Activated T-helper 1 cell treated with anti-CD3 and anti-CD28 coated beads, Interleukin-12 subunit alpha, Interleukin-12 subunit beta, Interleukin-2, Interleukin-4 antibody, amounts not matched to agents 30 ng/mL and 10 ng/mL and 1 ng/mL, durations not matched to agents 14 hours and 24 hours and 36 hours (primary cell): ENCODE measurements at regions of chr3 and their contacts with region 1.

Region 1: GRCh38 chr3:172666873-172667694 is 43.8 kb downstream of the NCEH1 start:
- DNase-seq: peak; percentile 70
- H3K4me3 Mint-ChIP-seq: peak overlapping the region; percentile 43
- H3K27ac Mint-ChIP-seq: no peak overlapping the region
- H3K4me1 Mint-ChIP-seq: peaks cover 20% of the 10 kb centered on the region
- H3K27me3 Mint-ChIP-seq: no peaks in the 10 kb centered on the region

Region 2: DNA sequence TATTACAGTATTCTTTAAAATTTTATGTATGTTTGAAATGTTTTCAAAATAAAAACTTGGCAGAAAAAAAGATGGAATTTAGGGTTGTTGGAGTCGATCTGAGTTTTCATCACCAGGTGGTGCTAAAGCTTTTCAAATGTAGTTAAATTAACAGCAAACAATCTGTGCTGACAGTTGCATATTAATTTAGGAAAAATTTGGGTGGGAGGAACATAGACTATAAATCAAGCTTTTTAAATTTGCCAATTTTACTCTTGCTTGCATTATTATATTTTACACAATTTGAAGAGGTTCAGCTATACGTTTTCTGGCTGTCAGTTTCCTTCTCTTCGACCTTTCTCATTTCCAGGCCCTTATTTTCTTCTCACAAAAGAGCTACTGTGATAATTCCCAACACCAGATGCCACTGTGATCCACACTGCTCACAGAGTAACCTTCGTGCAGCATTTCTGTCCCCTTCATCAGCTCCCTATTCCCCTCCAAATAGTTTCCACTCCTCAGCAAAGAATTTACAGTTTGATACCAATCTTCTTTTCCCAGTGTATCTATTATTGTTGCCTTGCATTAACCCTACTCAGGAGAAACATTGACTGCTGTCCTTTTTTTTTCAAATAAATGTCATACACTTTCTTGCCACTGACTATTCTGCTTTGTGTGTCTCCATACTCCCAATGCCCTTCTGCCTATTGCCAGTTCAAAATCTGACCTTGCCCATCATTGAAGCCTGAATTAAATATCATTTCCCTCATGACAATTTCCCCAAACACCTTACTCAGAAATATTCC is 1705.3 kb before region 1 on chr3:
- intact Hi-C with region 1: loop called (anchors 2 kb)
- DNase-seq: no peak
- H3K4me3 Mint-ChIP-seq: no peak overlapping the region
- H3K27ac Mint-ChIP-seq: no peak overlapping the region
- H3K4me1 Mint-ChIP-seq: no peaks in the 10 kb centered on the region
- H3K27me3 Mint-ChIP-seq: peaks cover 13% of the 10 kb centered on the region

Region 3: GRCh38 chr3:171646357-171647133 is 1020.5 kb before region 1 on chr3:
- intact Hi-C with region 1: loop called (anchors 2 kb)
- DNase-seq: no peak
- H3K4me3 Mint-ChIP-seq: no peak overlapping the region
- H3K27ac Mint-ChIP-seq: no peak overlapping the region
- H3K4me1 Mint-ChIP-seq: no peaks in the 10 kb centered on the region
- H3K27me3 Mint-ChIP-seq: peaks cover 2% of the 10 kb centered on the region

Region 4: GRCh38 chr3:172332256-172333041 is 334.6 kb before region 1 on chr3:
- intact Hi-C with region 1: loop called (anchors 1 kb)
- DNase-seq: peak; percentile 43
- H3K4me3 Mint-ChIP-seq: no peak overlapping the region
- H3K27ac Mint-ChIP-seq: no peak overlapping the region
- H3K4me1 Mint-ChIP-seq: no peaks in the 10 kb centered on the region
- H3K27me3 Mint-ChIP-seq: no peaks in the 10 kb centered on the region

Region 5: DNA sequence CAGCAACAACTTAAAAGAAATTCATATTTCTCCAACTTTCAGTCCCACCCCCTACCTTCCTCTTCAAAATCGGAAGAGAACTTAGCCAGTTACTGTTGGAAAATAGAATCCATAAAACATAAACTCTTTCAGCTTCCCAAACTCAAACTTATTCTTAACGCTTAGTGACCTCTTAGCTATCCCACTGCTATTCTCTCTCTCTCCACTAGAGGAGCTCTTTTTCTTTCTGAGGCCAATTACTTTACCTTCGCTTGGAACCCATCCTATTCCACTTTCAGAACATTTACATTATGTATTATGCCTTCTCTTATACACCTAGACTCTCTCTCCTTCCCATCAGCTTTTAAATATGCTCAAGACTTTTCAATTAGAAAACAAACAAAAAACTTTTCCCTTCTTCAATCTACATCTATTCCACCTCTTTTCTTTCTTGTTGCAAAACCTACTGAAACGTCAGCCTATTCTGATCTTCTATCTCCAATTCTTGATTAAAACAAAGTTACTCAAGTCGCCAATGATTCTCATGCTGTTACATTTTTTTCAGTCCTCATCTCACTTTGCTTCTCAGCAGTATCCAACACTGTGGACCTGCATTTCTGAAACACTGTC is 205.4 kb before region 1 on chr3:
- intact Hi-C with region 1: loop called (anchors 1 kb)
- DNase-seq: no peak
- H3K4me3 Mint-ChIP-seq: no peak overlapping the region
- H3K27ac Mint-ChIP-seq: no peak overlapping the region
- H3K4me1 Mint-ChIP-seq: no peaks in the 10 kb centered on the region
- H3K27me3 Mint-ChIP-seq: peaks cover 2% of the 10 kb centered on the region

Region 6: DNA sequence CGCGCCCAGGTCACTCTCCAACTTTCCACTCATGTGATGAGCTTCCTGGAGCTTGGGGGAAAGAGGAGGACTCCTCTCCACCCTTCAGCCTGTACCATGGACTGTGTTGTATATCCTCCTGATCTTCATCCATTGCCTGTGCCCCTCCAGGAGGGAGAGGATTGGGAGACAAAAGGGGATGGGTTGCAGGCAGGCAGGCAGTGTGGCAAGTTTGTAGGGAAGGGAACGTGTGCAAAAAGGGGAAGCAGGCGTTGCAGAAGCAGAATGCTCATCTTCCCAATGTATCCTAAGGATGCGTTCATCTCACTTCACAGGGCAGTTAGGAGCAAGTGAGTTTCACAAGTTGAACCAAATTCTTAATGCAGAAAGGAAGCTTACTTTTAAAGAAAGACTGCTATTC is 190.7 kb before region 1 on chr3:
- intact Hi-C with region 1: loop called (anchors 5 kb)
- DNase-seq: no peak
- H3K4me3 Mint-ChIP-seq: peak overlapping the region; percentile 16
- H3K27ac Mint-ChIP-seq: no peak overlapping the region
- H3K4me1 Mint-ChIP-seq: peaks cover 22% of the 10 kb centered on the region
- H3K27me3 Mint-ChIP-seq: peaks cover 7% of the 10 kb centered on the region

Region 7: DNA sequence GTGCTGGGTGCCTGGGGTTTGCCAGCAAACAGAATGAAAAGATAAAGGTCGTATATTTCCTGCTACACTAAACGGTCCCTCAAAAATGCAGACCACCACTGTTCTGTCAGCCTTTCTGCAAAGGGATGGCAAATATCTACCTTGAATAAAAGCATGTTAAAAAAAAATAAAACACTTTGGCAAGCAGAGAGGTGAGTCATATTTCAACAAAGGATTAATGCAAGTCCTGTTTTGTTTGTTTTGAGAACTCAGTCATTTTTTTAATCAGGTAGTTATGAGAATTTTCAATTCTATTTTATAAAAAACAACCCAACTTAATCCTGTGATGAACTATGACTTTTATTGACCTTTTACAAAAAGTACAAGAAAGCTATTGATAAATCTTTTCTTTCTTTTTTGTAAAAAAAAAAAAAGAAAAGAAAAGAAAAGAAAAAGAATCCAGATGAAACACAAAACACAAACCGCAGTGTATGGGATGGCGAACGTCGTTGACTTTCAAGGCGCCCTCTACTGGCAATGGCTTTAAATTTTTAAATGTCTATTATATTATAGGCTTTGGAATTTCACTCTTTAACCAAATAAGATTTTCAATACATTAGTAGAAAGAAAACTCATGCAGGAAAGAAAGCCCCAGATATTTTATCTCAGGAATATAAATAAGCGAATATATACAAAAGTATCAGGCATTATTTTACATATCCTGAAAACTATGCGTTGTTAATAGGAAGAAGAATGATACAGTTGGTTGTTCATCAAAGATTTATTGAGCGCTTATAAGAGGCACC is 44.0 kb before region 1 on chr3:
- intact Hi-C with region 1: loop called (anchors 2 kb)
- DNase-seq: no peak
- H3K4me3 Mint-ChIP-seq: peak overlapping the region; percentile 50
- H3K27ac Mint-ChIP-seq: no peak overlapping the region
- H3K4me1 Mint-ChIP-seq: peaks cover 25% of the 10 kb centered on the region
- H3K27me3 Mint-ChIP-seq: peaks cover 2% of the 10 kb centered on the region